HEK293 (cell line): ENCODE measurements at regions of chr1 and their contacts with region 1.

Region 1: DNA sequence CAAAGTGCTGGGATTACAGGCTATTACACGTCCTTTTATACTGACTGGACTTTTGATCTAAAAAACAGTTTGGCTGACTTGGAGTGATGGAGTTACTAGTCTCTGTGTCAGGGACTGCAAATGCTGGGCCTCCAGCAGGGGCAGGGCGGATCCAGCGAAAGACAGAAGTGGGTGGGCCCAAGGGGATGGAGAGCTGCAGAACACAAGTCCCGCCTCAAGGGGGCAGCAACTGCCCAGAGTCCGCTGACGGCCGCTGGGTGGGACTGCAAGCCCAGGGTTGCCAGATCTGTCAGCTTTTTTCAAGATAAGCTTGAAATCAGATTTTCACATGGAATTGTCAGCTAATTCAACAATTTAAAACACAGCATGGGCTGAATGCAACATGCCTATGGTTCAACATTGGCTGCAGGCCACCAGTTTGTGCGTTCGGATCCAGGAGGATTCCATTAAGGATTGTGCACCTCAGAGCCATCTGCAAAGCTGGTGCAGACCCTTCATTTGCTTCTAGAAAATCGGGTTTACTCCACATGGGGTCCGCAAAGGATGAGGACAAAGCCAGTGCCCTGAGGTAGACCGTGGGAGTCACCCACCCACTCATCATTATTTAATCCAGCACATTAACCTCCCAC is 10.7 kb downstream of the STMN1 start:
- H3K4me3 ChIP-seq: no peak overlapping the region
- H3K27ac ChIP-seq: no peak overlapping the region
- H3K4me1 ChIP-seq: no peaks in the 10 kb centered on the region
- CTCF ChIP-seq: peak; percentile 97

Region 2: GRCh38 chr1:25642574-25643108 is 252.8 kb before region 1 on chr1:
- CTCF ChIA-PET with region 1: no interaction called
- POLR2A ChIA-PET with region 1: no interaction called
- H3K4me3 ChIP-seq: no peak overlapping the region
- H3K27ac ChIP-seq: no peak overlapping the region
- H3K4me1 ChIP-seq: no peaks in the 10 kb centered on the region
- CTCF ChIP-seq: no peak

Region 3: DNA sequence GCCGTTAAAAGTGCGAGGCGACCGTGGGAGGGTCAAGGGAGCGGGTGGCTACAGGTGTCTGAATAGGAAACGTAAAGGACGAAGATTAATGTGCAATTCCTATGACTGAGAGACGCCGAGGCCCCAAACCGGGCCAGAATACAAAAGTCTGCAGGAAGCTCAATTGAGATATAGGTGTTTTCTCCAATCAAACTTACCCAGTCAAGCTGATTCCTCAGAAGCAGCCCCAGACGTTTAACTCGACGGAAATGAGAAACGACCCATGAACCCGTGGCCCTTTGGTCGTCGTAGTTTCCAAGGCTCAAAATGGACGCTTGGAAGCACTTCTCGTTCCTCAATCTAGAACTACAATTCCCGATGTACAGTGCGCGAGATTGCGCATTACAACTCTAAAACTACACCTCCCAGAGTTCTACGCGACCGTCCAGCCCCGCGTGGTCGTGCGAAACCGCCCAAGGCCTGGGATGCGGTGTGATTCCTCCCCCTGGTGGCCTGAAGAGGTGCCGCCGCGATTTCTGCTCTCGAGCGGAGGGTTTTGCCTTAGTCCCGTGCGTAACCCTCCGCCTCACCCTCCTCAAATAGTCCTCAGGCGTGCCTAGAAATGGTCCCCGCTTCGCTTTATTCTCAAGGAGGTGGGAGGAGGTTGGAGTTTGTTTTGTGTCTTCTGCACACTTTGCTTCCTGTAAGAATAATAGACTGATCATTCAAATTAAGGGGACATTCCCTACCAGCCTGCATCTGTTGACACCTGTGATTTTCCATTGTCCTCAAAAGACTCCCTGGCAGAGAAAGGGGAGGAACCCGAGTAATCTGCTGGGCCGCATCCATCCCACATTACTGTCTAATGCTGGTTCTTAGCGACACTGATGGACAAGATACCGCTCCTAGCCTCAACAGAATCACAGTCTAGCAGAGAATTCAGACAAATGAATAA is 102.6 kb after region 1 on chr1 and contains the start of gene PAFAH2:
- CTCF ChIA-PET with region 1: interaction called, 86 read pairs
- POLR2A ChIA-PET with region 1: interaction called, 30 read pairs
- H3K4me3 ChIP-seq: peak within 1 kb of the TSS; percentile 62
- H3K27ac ChIP-seq: peak within 1 kb of the TSS; percentile 4; the same call in 1 of the 2 replicates
- H3K4me1 ChIP-seq: no peaks in the 10 kb centered on the region
- CTCF ChIP-seq: peak; percentile 100

Region 4: DNA sequence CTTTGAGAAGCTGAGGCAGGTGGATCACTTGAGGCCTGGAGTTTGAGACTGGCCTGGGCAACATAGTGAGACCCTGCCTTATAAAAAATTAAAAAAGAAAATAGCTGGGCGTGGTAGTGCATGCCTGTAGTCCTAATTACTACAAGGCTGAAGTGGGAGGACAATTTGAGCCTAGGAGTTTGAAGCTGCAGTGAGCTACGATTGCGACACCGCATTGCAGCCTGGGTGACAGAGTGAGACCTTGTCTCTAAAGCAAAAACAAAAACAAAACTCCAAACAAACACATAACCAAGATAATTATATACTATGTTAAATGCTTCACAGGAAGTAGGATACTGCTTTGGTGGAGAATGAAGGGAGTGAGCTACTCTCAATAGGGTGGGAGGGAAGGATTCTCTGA is 107.8 kb after region 1 on chr1:
- CTCF ChIA-PET with region 1: interaction called, 86 read pairs
- POLR2A ChIA-PET with region 1: interaction called, 30 read pairs
- H3K4me3 ChIP-seq: no peak overlapping the region
- H3K27ac ChIP-seq: no peak overlapping the region
- H3K4me1 ChIP-seq: no peaks in the 10 kb centered on the region
- CTCF ChIP-seq: no peak

Region 5: GRCh38 chr1:26009796-26010460 is 114.4 kb after region 1 on chr1:
- CTCF ChIA-PET with region 1: interaction called, 14 read pairs
- POLR2A ChIA-PET with region 1: no interaction called
- H3K4me3 ChIP-seq: no peak overlapping the region
- H3K27ac ChIP-seq: no peak overlapping the region
- H3K4me1 ChIP-seq: no peaks in the 10 kb centered on the region
- CTCF ChIP-seq: peak; percentile 42; the same call in 1 of the 2 replicates